Activated B cell treated with CpG ODN at 0.5 μM for 24 hours (primary cell): ENCODE measurements at regions of chr2 and their contacts with region 1.

Region 1: GRCh38 chr2:105369747-105370690 is 28.8 kb downstream of the FHL2 start:
- DNase-seq: peak; percentile 61
- ATAC-seq: peak; percentile 99
- H3K4me3 Mint-ChIP-seq: no peak overlapping the region
- H3K27ac Mint-ChIP-seq: no peak overlapping the region
- H3K4me1 Mint-ChIP-seq: peaks cover 7% of the 10 kb centered on the region
- H3K27me3 Mint-ChIP-seq: no peaks in the 10 kb centered on the region
- CTCF ChIP-seq: no peak

Region 2: GRCh38 chr2:105521205-105521604 is 151.2 kb after region 1 on chr2:
- CTCF ChIA-PET with region 1: interaction called, 5 read pairs
- POLR2A ChIA-PET with region 1: no interaction called
- intact Hi-C with region 1: loop called (anchors 1 kb)
- DNase-seq: no peak
- ATAC-seq: no peak
- H3K4me3 Mint-ChIP-seq: no peak overlapping the region
- H3K27ac Mint-ChIP-seq: no peak overlapping the region
- H3K4me1 Mint-ChIP-seq: no peaks in the 10 kb centered on the region
- H3K27me3 Mint-ChIP-seq: peaks cover 4% of the 10 kb centered on the region
- CTCF ChIP-seq: no peak

Region 3: DNA sequence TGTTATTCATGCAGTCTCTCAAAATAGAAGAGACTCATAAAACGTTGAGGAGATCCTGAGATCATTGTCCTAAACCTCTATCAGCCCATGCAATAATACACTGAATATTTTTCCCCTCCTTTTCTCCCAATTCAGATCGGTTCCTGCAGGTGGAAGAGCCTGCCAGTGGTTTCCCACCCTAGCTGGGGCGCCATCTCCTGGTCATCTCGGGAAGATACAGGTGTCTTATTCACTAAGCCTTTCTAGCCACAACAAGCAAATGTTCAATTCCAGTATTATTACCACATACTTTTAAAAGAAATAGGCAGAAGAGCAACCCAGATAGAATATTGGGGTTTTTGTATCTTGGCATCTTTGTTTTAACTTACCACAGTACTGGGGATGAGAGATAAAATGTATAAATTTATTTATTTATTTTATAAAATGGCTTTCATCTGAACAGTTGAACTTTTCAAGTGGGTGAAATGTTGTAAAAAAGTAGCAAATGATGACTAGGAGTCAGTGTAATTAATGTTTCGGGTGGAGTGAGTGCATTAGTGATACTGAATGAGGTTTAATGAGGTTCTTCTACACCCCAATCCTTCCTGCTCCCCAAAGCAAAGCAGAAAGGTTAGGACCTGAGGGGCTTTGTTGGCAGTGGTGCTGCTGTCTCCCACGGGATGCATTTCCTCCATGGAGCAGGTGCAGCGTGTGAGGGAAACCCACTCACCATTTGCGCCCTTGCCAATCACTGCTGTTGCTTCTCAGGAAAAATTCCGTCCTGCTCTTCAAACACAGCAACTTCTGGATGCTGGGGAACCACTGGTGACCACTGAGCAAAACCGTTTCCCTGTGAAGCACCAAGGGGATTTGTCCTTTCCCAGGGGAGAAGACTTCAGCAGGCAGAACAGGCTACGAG is 176.0 kb after region 1 on chr2:
- CTCF ChIA-PET with region 1: interaction called, 3 read pairs
- POLR2A ChIA-PET with region 1: no interaction called
- intact Hi-C with region 1: loop called (anchors 1 kb)
- DNase-seq: no peak
- ATAC-seq: peak; percentile 54
- H3K4me3 Mint-ChIP-seq: no peak overlapping the region
- H3K27ac Mint-ChIP-seq: no peak overlapping the region
- H3K4me1 Mint-ChIP-seq: peaks cover 3% of the 10 kb centered on the region
- H3K27me3 Mint-ChIP-seq: peaks cover 18% of the 10 kb centered on the region
- CTCF ChIP-seq: peak; percentile 56

Region 4: DNA sequence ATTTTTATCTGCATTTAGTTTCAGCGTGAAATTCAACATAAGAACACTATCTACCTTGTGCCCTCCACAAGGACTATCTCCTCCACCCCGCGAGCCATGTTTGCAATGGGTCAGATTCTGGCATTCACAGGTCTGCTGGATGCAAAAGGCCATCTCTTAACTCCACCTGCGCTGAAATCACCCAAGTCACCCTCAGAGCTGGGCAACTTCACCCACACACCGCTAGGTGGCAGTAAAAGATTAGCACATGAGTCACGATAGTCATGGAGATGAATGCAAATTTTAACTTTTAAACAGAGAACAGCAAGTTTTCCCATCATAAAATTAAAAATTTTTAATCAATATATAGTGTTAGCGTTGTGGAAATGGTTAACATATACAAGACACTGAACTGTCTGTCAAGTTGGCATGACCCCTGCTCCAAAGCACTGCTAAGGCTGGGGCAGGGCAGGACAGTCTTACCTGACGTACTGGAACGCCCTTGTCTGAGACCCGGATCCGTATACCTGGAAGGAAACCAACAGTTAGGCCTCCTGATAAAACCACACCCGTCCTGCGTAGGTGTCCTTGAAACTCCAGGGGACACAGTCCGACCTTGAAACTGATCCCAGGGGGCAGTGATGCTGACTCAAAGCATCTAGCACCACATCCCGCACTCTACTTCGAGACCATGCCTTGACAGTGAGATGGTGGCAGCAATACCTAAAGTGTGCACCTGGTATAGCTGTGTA is 734.5 kb after region 1 on chr2:
- CTCF ChIA-PET with region 1: no interaction called
- POLR2A ChIA-PET with region 1: no interaction called
- intact Hi-C with region 1: loop called (anchors 2 kb)
- DNase-seq: no peak
- ATAC-seq: peak; percentile 40
- H3K4me3 Mint-ChIP-seq: no peak overlapping the region
- H3K27ac Mint-ChIP-seq: no peak overlapping the region
- H3K4me1 Mint-ChIP-seq: peaks cover 2% of the 10 kb centered on the region
- H3K27me3 Mint-ChIP-seq: no peaks in the 10 kb centered on the region
- CTCF ChIP-seq: peak; percentile 75

Region 5: DNA sequence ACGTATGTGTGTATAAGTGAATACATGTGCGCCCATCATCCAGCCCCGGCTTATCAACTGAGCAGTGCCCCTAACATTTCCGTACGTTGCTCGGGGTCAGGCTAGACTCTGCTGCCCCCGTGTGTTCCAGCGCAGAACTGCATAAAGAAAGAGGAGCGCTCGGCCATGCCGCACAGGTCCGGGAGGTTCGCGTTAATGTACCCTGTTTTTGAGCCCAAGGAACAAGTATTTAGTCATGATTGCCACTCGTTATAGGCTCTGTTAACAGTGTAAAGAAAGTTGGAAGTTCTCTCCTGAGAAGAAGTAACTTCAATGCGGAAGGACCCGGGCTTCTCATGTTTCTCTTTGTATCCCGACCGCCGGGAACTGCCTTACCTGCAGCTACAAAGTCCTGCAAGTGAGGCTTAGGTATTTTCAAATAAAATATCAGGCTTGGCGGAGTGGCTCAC is 1172.8 kb after region 1 on chr2:
- CTCF ChIA-PET with region 1: interaction called, 5 read pairs
- POLR2A ChIA-PET with region 1: no interaction called
- intact Hi-C with region 1: loop called (anchors 1 kb)
- DNase-seq: peak; percentile 66
- ATAC-seq: peak; percentile 95
- H3K4me3 Mint-ChIP-seq: peak overlapping the region; percentile 58
- H3K27ac Mint-ChIP-seq: no peak overlapping the region
- H3K4me1 Mint-ChIP-seq: peaks cover 2% of the 10 kb centered on the region
- H3K27me3 Mint-ChIP-seq: peaks cover 21% of the 10 kb centered on the region
- CTCF ChIP-seq: peak; percentile 98

Region 6: DNA sequence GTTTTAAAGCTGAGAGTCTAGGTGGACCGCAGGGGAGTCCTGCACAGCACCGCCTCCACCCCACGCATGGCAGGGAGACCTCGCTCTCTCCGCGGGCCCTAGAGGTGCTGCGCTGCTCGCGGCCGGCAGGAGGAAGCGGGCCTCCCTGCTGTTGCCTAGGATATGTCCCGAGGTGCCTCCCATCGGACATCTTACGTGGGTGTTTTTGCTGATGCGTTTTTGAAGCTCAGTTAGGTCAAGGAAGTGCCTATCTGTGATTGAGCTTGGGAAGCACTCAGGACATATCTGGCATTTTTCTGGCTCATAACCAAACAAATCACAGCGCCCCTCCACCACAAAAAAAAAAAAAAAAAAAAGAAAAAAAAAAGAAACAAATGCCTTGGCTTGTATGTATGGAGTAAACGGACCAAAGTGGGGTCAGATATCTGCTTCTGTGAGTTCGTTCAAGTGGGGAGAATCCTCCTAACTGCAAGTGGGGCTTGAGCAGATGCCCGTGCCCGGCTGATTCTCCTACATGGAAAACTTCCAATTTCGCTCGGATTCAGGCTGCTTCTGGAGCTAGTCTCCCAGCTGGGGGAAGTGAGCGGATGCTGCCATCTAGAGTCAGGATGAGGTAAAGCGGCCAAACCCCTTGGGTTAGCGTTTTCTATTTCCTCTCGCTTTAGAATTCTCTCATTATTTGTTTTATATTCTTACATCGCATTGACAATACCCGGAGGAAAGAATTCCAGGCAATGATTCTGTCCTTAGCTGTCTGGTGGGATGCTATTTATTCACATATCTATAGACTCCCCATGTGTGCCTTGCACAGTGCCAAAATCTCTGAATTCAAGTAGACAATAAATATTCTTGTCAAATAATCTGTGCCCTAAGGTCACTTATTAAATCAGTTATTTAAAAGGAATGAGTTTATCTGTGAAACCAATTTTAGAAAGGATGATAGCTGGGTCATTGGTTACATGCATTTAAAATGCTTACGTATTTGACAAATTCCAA is 1212.4 kb after region 1 on chr2:
- CTCF ChIA-PET with region 1: interaction called, 4 read pairs
- POLR2A ChIA-PET with region 1: no interaction called
- intact Hi-C with region 1: loop called (anchors 1 kb)
- DNase-seq: peak; percentile 37
- ATAC-seq: peak; percentile 83
- H3K4me3 Mint-ChIP-seq: peak overlapping the region; percentile 86
- H3K27ac Mint-ChIP-seq: no peak overlapping the region
- H3K4me1 Mint-ChIP-seq: peaks cover 11% of the 10 kb centered on the region
- H3K27me3 Mint-ChIP-seq: peaks cover 27% of the 10 kb centered on the region
- CTCF ChIP-seq: peak; percentile 89